ENCODE measurements at regions of chr19 and their contacts with region 1.

Region 1: DNA sequence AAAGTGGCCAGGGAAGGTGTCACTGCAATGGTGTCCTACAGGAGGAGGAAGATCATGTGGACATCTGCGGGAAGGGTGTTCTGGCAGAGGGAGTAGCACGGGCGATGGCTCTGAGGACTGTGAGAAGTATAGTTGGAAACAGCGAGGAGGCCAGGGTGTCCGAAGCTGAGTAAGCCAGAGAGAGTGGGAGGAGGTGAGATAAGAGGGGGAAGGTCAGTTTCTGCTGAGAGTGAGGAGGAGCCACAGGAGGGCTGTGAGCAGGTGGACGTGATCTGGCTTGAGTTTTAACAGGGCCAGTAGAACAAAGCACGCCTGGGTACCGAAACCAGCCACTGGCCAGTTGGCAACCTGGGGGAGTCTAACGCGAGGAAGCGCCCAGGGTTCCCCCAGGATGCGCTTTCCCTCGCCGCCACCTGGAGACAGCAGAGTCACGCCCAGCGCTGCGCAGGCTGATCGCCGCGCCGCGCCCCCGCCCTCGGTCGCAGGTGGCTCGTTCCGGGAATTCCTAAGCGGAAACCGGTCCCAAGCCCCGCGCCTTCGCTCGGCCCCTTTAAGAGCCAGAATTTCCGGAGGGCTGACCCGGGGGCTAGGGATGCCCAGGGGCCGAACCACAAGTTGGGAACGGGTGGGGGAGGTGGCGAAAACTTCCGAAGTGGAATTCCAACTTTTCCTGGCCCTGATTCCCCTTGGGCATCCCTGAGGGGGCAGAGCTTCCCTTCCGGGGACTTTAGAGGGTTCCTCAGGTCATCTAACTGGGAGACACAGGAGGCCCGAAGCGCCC is 1.1 kb upstream of the LSR start:
- DNase-seq: peak in 8 of 9 experiments; percentile 41 to 82 (median 65)
- ATAC-seq: peak; percentile 33
- H3K4me3 ChIP-seq: peak overlapping the region; percentile 65 to 96
- H3K4me3 Mint-ChIP-seq: peak overlapping the region; percentile 97
- H3K27ac ChIP-seq: peak overlapping the region; percentile 83 to 84
- H3K27ac Mint-ChIP-seq: peak overlapping the region; percentile 98
- H3K4me1 ChIP-seq: peaks cover 19% of the 10 kb centered on the region
- H3K4me1 Mint-ChIP-seq: peaks cover 39% of the 10 kb centered on the region
- H3K27me3 ChIP-seq: peaks cover 0 to 9% of the 10 kb centered on the region in 2 experiments
- H3K27me3 Mint-ChIP-seq: no peaks in the 10 kb centered on the region
- CTCF ChIP-seq: peak; percentile 43

Region 2: DNA sequence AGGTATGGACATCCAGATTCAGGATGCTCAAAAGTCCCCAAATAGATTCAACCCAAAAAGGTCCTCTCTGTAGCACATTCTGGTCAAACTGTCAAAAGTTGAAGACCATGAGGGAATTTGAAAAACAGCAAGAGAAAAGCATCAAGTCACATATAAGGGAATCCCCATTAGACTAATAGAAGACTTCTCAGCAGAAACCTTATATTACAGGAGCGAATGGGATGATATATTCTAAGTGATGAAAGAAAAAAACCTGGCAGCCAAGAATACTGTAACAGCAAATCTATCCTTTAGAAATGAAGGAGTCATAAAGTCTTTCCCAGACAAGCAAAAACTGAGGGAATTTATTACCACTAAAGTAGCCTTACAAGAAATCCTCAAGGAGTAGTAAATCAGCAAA is 63.4 kb before region 1 on chr19:
- CTCF ChIA-PET with region 1: no interaction called
- POLR2A ChIA-PET with region 1: no interaction called
- intact Hi-C with region 1: no loop called
- DNase-seq: no peak
- ATAC-seq: no peak
- H3K4me3 ChIP-seq: no peak overlapping the region
- H3K4me3 Mint-ChIP-seq: no peak overlapping the region
- H3K27ac ChIP-seq: no peak overlapping the region
- H3K27ac Mint-ChIP-seq: no peak overlapping the region
- H3K4me1 ChIP-seq: peaks cover 14% of the 10 kb centered on the region
- H3K4me1 Mint-ChIP-seq: peaks cover 8% of the 10 kb centered on the region
- H3K27me3 ChIP-seq: no peaks in the 10 kb centered on the region
- H3K27me3 Mint-ChIP-seq: no peaks in the 10 kb centered on the region
- CTCF ChIP-seq: no peak

Region 3: DNA sequence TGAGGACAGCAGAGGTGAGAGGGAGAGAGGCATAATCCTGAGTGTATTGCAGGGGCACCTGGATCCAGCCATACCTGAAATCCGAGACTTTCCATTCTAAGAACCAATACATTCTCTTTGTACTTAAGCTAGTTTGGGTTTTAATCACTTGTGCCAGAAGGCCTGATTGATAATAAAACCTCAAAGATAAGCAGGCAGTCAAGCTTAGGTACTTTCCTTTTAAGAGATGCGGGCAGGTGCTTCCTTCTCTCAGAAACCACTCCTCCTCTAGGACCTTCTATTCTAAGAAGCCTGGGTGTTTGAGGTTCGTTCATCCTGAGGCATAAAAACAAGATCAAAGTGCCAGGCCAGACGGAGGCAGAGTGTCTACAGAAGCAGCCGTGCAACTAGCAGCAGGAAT is 41.3 kb before region 1 on chr19:
- CTCF ChIA-PET with region 1: interaction called, 3 read pairs
- POLR2A ChIA-PET with region 1: interaction called, 9 read pairs
- intact Hi-C with region 1: loop called in 1 of 2 experiments (anchors 2 kb)
- DNase-seq: peak; percentile 23 to 91 (median 61)
- ATAC-seq: peak; percentile 28
- H3K4me3 ChIP-seq: peak overlapping the region in 1 of 2 experiments; percentile 9
- H3K4me3 Mint-ChIP-seq: peak overlapping the region; percentile 42
- H3K27ac ChIP-seq: peak overlapping the region; percentile 66 to 75
- H3K27ac Mint-ChIP-seq: peak overlapping the region; percentile 98
- H3K4me1 ChIP-seq: peaks cover 70% of the 10 kb centered on the region
- H3K4me1 Mint-ChIP-seq: peaks cover 69% of the 10 kb centered on the region
- H3K27me3 ChIP-seq: no peaks in the 10 kb centered on the region
- H3K27me3 Mint-ChIP-seq: no peaks in the 10 kb centered on the region
- CTCF ChIP-seq: no peak

Region 4: DNA sequence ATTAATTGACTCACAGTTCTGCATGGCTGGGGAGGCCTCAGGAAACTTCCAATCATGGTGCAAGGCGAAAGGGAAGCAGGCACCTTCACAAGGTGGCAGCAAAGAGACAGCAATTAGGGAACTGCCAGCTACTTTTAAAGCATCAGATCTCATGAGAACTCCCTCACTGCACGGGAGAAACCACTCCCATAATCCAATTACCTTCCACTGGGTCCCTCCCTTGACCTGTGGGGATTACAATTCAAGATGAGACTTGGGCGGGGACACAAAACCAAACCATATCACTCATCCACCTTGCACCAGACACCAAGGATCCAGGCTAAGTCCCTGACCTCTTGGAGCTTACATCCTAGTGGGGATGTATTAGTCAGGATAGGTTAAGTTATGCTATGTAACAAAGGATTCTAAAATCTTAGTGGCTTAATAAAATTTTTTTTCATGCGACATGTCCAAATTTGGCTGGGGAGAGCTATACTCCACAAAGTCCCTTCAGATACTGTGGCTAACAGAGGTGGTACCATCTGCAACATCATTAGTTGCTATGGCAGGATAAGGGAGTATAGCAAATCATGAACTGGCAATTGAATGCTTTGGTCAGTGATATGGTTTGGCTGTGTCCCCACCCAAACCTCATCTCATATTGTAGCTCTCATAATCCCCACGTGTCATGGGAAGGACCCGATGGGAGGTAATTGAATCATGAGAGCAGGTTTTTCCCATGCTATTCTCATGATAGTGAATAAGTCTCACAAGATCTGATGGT is 10.9 kb before region 1 on chr19:
- CTCF ChIA-PET with region 1: interaction called, 4 read pairs
- POLR2A ChIA-PET with region 1: no interaction called
- intact Hi-C with region 1: loop called in 1 of 2 experiments (anchors 1 kb)
- DNase-seq: peak in 4 of 9 experiments; percentile 38 to 59 (median 50)
- ATAC-seq: no peak
- H3K4me3 ChIP-seq: no peak overlapping the region
- H3K4me3 Mint-ChIP-seq: no peak overlapping the region
- H3K27ac ChIP-seq: no peak overlapping the region
- H3K27ac Mint-ChIP-seq: peak overlapping the region; percentile 32
- H3K4me1 ChIP-seq: peaks cover 24% of the 10 kb centered on the region
- H3K4me1 Mint-ChIP-seq: peaks cover 29% of the 10 kb centered on the region
- H3K27me3 ChIP-seq: no peaks in the 10 kb centered on the region
- H3K27me3 Mint-ChIP-seq: no peaks in the 10 kb centered on the region
- CTCF ChIP-seq: no peak

Region 5: GRCh38 chr19:35279985-35280821 is 32.5 kb after region 1 on chr19:
- CTCF ChIA-PET with region 1: no interaction called
- POLR2A ChIA-PET with region 1: no interaction called
- intact Hi-C with region 1: no loop called
- DNase-seq: no peak
- ATAC-seq: peak; percentile 24
- H3K4me3 ChIP-seq: no peak overlapping the region
- H3K4me3 Mint-ChIP-seq: no peak overlapping the region
- H3K27ac ChIP-seq: no peak overlapping the region
- H3K27ac Mint-ChIP-seq: peak overlapping the region; percentile 45
- H3K4me1 ChIP-seq: no peaks in the 10 kb centered on the region
- H3K4me1 Mint-ChIP-seq: peaks cover 4% of the 10 kb centered on the region
- H3K27me3 ChIP-seq: no peaks in the 10 kb centered on the region
- H3K27me3 Mint-ChIP-seq: peaks cover 15% of the 10 kb centered on the region
- CTCF ChIP-seq: no peak

Region 6: DNA sequence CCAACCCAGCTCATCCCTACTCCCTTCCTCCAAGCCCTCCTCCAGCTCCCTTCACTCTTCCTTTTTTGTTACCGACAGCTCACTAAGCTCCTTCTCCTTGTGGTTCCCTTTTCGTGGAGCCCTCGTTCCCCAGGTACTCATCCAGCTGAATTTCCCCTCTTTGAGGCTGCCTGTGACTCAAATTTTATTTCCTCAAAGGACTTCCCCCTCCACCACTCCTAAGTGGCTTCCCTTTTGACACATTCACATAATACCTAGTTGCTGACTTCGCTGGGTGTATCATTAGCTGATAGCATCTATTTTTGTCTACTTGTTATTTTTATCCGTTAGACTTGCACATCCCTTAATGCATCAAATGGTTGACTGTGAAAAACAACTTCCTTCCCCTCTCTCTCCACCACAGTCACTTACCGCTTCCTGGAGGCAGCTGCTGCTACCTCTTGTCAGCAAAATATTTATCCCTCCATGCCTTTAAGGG is 214.8 kb after region 1 on chr19:
- CTCF ChIA-PET with region 1: no interaction called
- POLR2A ChIA-PET with region 1: no interaction called
- intact Hi-C with region 1: loop called in 1 of 2 experiments (anchors 2 kb)
- DNase-seq: peak; percentile 15 to 92 (median 65)
- ATAC-seq: peak; percentile 91
- H3K4me3 ChIP-seq: peak overlapping the region in 1 of 2 experiments; percentile 6
- H3K4me3 Mint-ChIP-seq: peak overlapping the region; percentile 73
- H3K27ac ChIP-seq: peak overlapping the region; percentile 40 to 91
- H3K27ac Mint-ChIP-seq: peak overlapping the region; percentile 95
- H3K4me1 ChIP-seq: peaks cover 28% of the 10 kb centered on the region
- H3K4me1 Mint-ChIP-seq: peaks cover 30% of the 10 kb centered on the region
- H3K27me3 ChIP-seq: no peaks in the 10 kb centered on the region
- H3K27me3 Mint-ChIP-seq: no peaks in the 10 kb centered on the region
- CTCF ChIP-seq: no peak

Region 7: GRCh38 chr19:35495107-35496064 is 247.7 kb after region 1 on chr19:
- CTCF ChIA-PET with region 1: no interaction called
- POLR2A ChIA-PET with region 1: no interaction called
- intact Hi-C with region 1: loop called in 1 of 2 experiments (anchors 1 kb)
- DNase-seq: peak; percentile 38 to 80 (median 61)
- ATAC-seq: peak; percentile 100
- H3K4me3 ChIP-seq: no peak overlapping the region
- H3K4me3 Mint-ChIP-seq: peak overlapping the region; percentile 22
- H3K27ac ChIP-seq: no peak overlapping the region
- H3K27ac Mint-ChIP-seq: no peak overlapping the region
- H3K4me1 ChIP-seq: no peaks in the 10 kb centered on the region
- H3K4me1 Mint-ChIP-seq: peaks cover 7% of the 10 kb centered on the region
- H3K27me3 ChIP-seq: no peaks in the 10 kb centered on the region
- H3K27me3 Mint-ChIP-seq: peaks cover 8% of the 10 kb centered on the region
- CTCF ChIP-seq: peak; percentile 97

Measured in CD8-positive, alpha-beta T cell (primary cell).